Activated naive CD4-positive, alpha-beta T cell treated with anti-CD3 and anti-CD28 coated beads for 36 hours (primary cell): ENCODE measurements at regions of chrX and their contacts with region 1.

Region 1: DNA sequence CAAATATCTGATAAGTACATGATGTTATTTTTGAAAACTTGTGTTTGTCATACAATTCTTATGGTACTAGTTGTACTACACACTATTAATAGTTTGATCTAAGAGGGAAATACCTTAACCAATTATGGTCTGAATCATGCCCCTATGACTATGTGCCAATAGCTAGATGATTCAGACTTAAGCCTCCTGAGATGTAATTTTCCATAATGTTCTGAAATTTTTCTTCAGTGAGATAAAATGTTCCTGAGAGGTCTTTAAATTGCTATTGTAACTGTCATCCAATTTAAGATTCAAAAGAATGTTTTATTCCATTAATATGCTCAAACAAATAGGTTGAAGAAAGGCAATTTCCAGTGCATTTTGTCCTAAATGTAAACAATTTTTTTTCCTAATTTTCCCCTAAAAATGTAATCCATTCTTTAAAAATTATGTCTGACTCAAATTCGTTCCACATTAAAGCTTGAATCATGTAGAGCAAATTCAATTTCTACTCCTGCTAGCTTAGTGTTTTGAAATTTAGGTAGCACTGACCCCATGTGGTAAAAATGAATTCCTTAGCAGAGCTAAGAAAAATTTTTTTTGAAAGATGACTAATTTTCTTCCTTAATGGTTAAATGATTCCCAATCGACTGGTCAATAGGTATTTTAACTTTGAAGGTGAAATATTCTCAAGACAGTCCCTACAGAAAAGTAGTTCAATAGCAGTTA is 49.1 kb downstream of the APOOL start:
- DNase-seq: no peak
- H3K4me3 Mint-ChIP-seq: no peak overlapping the region
- H3K27ac Mint-ChIP-seq: peak overlapping the region; percentile 13
- H3K4me1 Mint-ChIP-seq: peaks cover 13% of the 10 kb centered on the region
- H3K27me3 Mint-ChIP-seq: no peaks in the 10 kb centered on the region

Region 2: DNA sequence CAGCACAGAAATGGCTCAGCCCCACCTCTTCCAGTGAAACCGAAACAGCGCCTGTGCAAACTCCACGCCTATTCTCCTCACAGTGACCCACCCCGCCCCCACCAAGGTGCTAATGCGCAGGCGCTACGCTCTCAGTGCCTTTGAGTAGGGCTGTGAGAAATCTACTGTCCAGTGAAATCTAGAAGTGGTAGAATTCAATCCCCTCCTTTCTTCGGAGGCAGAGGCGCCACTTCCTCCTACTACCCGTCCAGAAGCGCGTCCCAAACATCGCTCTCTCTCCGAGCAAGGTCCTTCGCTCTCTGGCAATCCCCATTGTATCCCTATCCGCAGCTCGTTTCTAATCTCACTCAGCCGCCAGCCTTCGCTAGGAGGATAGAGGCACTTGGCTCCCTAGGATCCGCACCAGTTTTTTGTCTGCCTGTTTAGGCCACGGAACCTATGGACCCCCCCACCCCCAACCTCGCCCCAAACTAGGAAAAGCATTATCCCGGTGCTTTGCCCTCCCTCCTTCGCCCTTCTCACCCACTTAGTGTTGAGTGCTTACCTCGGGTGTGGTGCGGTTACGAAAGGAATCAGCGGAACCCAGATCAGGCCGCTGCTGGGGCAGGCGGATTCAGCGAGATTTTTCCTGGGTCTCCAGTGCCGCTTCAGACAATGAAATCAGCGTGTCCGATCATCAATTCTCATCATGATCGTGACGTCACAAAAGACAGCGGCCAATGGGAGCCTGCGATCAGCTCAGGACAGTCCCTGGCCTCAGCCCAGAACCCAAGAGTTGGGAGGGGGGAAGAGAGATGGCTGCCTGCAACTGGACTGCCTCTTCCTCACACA is 550.8 kb before region 1 on chrX and contains the start of gene HDX:
- CTCF ChIA-PET with region 1: no interaction called
- intact Hi-C with region 1: loop called (anchors 5 kb)
- DNase-seq: peak; percentile 72
- H3K4me3 Mint-ChIP-seq: peak within 1 kb of the TSS; percentile 80
- H3K27ac Mint-ChIP-seq: peak within 1 kb of the TSS; percentile 78
- H3K4me1 Mint-ChIP-seq: peaks cover 4% of the 10 kb centered on the region
- H3K27me3 Mint-ChIP-seq: no peaks in the 10 kb centered on the region
- total RNA-seq, gene HDX: 0.74 to 0.89 TPM

Region 3: GRCh38 chrX:84729809-84730208 is 323.0 kb before region 1 on chrX:
- CTCF ChIA-PET with region 1: no interaction called
- intact Hi-C with region 1: loop called (anchors 1 kb)
- DNase-seq: peak; percentile 4
- H3K4me3 Mint-ChIP-seq: no peak overlapping the region
- H3K27ac Mint-ChIP-seq: no peak overlapping the region
- H3K4me1 Mint-ChIP-seq: no peaks in the 10 kb centered on the region
- H3K27me3 Mint-ChIP-seq: no peaks in the 10 kb centered on the region

Region 4: DNA sequence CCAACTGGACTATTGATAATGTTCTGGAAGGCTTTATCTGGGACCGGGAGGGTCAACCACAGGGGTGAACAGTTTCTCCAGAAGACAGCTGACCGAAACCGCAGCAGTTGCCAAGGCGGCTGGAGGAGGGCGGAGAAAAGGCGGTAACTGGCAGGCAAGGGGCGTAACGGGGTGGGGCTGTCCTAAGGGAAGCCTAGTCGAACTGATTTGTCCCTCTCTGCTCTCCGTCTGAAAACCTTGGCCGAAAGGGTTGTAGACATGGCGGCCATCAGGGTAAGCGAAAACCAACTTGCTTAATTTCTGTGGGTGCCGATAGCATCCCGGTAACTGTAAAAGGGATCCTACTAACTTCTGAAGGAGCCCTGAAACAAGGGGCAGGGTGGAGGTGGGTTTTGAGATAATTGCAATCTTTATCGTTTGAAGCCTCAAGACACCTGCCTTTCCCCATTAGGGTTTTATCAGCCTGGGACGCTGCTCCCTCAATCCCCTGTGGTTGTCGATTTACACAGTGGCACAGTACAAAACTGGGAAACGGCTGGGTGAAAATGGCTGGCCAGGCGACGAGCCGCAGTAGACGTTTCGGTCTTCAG is 49.0 kb before region 1 on chrX and contains the start of gene APOOL:
- CTCF ChIA-PET with region 1: no interaction called
- intact Hi-C with region 1: loop called (anchors 1 kb)
- DNase-seq: peak; percentile 88
- H3K4me3 Mint-ChIP-seq: peak within 1 kb of the TSS; percentile 84
- H3K27ac Mint-ChIP-seq: peak within 1 kb of the TSS; percentile 71
- H3K4me1 Mint-ChIP-seq: peaks cover 14% of the 10 kb centered on the region
- H3K27me3 Mint-ChIP-seq: no peaks in the 10 kb centered on the region
- total RNA-seq, gene APOOL: 23.3 to 24.1 TPM